ENCODE measurements at regions of chr6 and their contacts with region 1.

Region 1: GRCh38 chr6:63352587-63353285 is 33.0 kb upstream of the LGSN start:
- DNase-seq: no peak
- H3K4me3 ChIP-seq: no peak overlapping the region
- H3K27ac ChIP-seq: no peak overlapping the region
- H3K4me1 ChIP-seq: no peaks in the 10 kb centered on the region
- H3K27me3 ChIP-seq: no peaks in the 10 kb centered on the region
- CTCF ChIP-seq: peak in 2 of 3 experiments; percentile 74 to 81; a peak in 3 of 4 replicates
- EP300 ChIP-seq: no peak
- POLR2A ChIP-seq: no peak
- RAD21 ChIP-seq: peak; percentile 94

Region 2: DNA sequence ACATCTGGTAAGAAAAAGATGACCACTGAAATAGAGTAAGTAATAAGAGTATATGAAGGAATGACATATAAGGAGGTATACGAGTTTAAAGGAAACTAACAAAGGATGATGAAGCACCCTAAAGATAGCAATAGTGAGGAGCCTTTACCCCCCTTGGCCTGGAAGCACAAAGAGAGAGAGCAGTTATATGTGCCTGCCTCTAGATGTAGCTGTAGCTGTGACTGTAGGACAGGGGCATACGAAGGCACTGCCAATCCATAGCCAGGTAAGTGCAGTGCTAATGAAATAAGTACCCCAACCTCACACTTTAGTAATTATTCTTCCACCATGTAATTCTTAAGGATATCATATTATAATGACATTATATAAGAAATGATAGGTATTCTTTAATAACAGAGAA is 231.6 kb before region 1 on chr6:
- CTCF ChIA-PET with region 1: no interaction called
- POLR2A ChIA-PET with region 1: no interaction called
- DNase-seq: no peak
- H3K4me3 ChIP-seq: no peak overlapping the region
- H3K27ac ChIP-seq: no peak overlapping the region
- H3K4me1 ChIP-seq: no peaks in the 10 kb centered on the region
- H3K27me3 ChIP-seq: no peaks in the 10 kb centered on the region
- CTCF ChIP-seq: peak in 2 of 3 experiments; percentile 32 to 65; a peak in 2 of 4 replicates
- EP300 ChIP-seq: no peak
- POLR2A ChIP-seq: no peak
- RAD21 ChIP-seq: peak; percentile 60 to 66

Region 3: DNA sequence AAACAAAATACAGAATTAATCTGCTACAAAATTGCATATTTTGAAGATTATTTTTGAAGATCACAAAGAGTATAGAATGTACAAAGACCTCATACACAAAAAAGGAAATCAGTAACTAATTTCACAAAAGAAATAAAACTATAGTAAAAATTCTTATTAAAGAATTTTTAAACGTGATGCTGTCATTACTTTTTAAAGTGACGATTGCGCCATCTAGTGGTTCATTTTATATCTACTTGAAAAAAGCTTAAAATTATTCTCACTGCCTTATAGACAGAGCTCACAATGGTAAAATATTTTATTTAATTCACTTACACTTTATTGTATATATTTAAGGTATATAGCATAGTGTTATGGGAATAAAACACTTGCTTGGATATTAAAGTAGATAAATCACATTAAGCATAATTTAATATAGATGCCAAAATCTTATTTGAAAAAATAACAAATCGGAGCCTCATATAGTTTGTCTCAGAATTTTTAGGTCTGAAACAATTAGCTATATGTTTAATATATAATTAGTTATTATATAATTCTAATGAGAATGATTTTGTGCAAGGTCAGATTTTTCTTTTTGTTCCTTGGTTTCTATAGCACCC is 411.7 kb after region 1 on chr6:
- CTCF ChIA-PET with region 1: interaction called, 12 read pairs
- POLR2A ChIA-PET with region 1: no interaction called
- DNase-seq: no peak
- H3K4me3 ChIP-seq: no peak overlapping the region
- H3K27ac ChIP-seq: no peak overlapping the region
- H3K4me1 ChIP-seq: no peaks in the 10 kb centered on the region
- H3K27me3 ChIP-seq: no peaks in the 10 kb centered on the region
- CTCF ChIP-seq: peak in 1 of 3 experiments; percentile 19; a peak in 1 of 4 replicates
- EP300 ChIP-seq: no peak
- POLR2A ChIP-seq: no peak
- RAD21 ChIP-seq: peak in 1 of 2 experiments; percentile 50; a peak in 3 of 4 replicates

Measured in H1 (cell line).